ENCODE measurements at regions of chr14 and their contacts with region 1.

Region 1: GRCh38 chr14:21498553-21499526 is 12.3 kb downstream of the METTL3 start:
- DNase-seq: peak; percentile 19
- H3K4me3 ChIP-seq: no peak overlapping the region
- H3K27ac ChIP-seq: no peak overlapping the region
- H3K4me1 ChIP-seq: no peaks in the 10 kb centered on the region
- H3K27me3 ChIP-seq: no peaks in the 10 kb centered on the region
- CTCF ChIP-seq: peak; percentile 51 to 52

Region 2: DNA sequence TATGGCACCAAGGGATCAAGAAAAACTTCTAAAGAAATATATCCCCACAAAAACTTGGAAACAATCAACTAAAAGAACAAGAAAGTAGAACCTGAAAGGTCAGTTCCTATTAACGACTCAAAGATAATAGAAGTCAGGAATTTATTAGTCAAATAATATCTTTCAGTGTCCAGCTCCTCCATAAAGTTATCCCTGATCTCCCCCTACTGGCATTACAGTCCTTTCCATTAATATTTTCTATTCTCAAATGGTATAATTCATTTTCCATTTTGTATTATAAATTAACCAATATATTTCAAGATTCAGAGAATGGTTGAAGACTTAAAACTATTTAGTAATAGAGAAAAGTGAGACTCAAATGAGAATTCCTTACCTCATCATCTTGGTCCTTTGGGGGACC is 103.4 kb before region 1 on chr14:
- CTCF ChIA-PET with region 1: interaction called, 14 read pairs
- dilution Hi-C with region 1: no loop called
- in situ Hi-C with region 1: no loop called
- intact Hi-C with region 1: no loop called
- DNase-seq: no peak
- H3K4me3 ChIP-seq: no peak overlapping the region
- H3K27ac ChIP-seq: no peak overlapping the region
- H3K4me1 ChIP-seq: no peaks in the 10 kb centered on the region
- H3K27me3 ChIP-seq: no peaks in the 10 kb centered on the region
- CTCF ChIP-seq: peak in 1 of 2 donors; percentile 15

Region 3: DNA sequence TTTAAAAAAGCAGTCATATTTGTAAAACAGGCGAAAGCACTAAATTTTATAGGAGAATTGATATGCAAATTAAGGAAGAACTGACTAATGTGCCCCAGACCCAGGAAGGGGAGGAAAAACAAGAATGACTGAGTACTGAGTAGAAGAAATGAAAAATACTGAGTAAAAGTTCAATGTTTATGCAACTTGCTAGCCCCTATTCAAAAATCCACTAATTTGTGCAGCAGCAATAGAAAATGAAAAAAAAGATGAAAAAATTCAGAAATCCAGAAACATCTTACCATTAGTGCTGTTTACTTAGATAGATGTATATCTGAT is 49.0 kb before region 1 on chr14:
- CTCF ChIA-PET with region 1: no interaction called
- dilution Hi-C with region 1: no loop called
- in situ Hi-C with region 1: no loop called
- intact Hi-C with region 1: no loop called
- DNase-seq: no peak
- H3K4me3 ChIP-seq: no peak overlapping the region
- H3K27ac ChIP-seq: no peak overlapping the region
- H3K4me1 ChIP-seq: peaks cover 18% of the 10 kb centered on the region
- H3K27me3 ChIP-seq: no peaks in the 10 kb centered on the region
- CTCF ChIP-seq: no peak

Region 4: DNA sequence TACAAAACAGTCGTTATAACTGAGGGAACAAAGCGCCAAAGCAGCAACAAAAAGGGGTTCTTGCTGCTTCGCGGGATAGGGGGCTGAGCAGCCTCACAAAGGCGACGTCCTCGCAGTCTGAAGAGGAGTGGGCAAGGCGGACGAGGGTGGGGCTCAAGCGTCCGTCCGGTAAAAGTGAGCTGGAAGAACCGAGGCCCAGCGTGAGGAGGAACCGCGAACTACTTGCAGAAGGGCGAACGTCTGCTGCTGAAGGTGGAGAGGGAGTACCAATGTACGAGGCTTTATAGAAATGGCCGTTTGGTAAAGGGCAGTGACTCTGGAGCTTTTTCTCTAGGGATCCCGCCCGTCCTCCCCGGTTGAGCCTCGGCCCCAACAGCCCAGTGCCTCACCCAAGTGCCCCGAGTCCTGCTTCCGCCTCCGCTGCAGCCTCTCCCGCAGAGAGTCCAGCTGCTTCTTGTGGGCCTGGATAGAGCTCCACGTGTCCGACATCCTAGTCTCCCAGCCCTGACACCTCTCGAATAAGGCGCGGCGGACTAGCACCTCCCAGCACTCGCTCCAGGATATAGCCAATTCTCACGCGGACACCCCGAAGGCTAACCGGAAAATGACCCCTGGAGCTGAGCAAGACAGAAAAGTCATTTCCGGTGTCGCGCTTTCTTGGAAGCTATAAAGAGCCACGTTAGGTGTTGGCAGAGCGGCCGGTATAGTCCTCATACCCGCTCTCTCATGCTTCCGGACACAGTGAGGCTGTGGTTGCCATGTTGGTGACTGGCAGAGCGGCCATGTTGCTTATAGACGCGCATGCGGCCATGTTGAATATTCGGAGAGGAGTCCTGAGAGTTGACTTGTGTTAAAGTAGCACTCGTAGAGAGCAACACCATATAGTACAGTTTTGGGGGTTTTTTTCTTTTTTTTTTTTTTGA is 12.2 kb after region 1 on chr14 and contains the start of gene METTL3:
- CTCF ChIA-PET with region 1: interaction called, 12 read pairs
- dilution Hi-C with region 1: no loop called
- in situ Hi-C with region 1: no loop called
- intact Hi-C with region 1: no loop called
- DNase-seq: peak; percentile 99
- H3K4me3 ChIP-seq: peak within 1 kb of the TSS; percentile 72 to 90 (median 76)
- H3K27ac ChIP-seq: peak within 1 kb of the TSS; percentile 59
- H3K4me1 ChIP-seq: no peaks in the 10 kb centered on the region
- H3K27me3 ChIP-seq: no peaks in the 10 kb centered on the region
- CTCF ChIP-seq: no peak
- total RNA-seq, gene METTL3: 40.3 to 43.3 TPM

Region 5: GRCh38 chr14:21536418-21537089 is 37.7 kb after region 1 on chr14:
- CTCF ChIA-PET with region 1: no interaction called
- dilution Hi-C with region 1: no loop called
- in situ Hi-C with region 1: no loop called
- intact Hi-C with region 1: no loop called
- DNase-seq: no peak
- H3K4me3 ChIP-seq: peak overlapping the region in 1 of 3 experiments; percentile 10
- H3K27ac ChIP-seq: no peak overlapping the region
- H3K4me1 ChIP-seq: no peaks in the 10 kb centered on the region
- H3K27me3 ChIP-seq: peaks cover 8% of the 10 kb centered on the region
- CTCF ChIP-seq: no peak

Measured in mammary epithelial cell (primary cell).